Mammary epithelial cell (primary cell): ENCODE measurements at regions of chr11 and their contacts with region 1.

Region 1: GRCh38 chr11:107770551-107770951 is 58.7 kb upstream of the SLN start:
- DNase-seq: no peak
- H3K4me3 ChIP-seq: no peak overlapping the region
- H3K27ac ChIP-seq: no peak overlapping the region
- H3K4me1 ChIP-seq: no peaks in the 10 kb centered on the region
- H3K27me3 ChIP-seq: no peaks in the 10 kb centered on the region
- CTCF ChIP-seq: no peak

Region 2: GRCh38 chr11:107689317-107690202 is 81.0 kb before region 1 on chr11:
- CTCF ChIA-PET with region 1: no interaction called
- dilution Hi-C with region 1: no loop called
- in situ Hi-C with region 1: no loop called
- intact Hi-C with region 1: loop called (anchors 2 kb)
- DNase-seq: peak; percentile 34
- H3K4me3 ChIP-seq: no peak overlapping the region
- H3K27ac ChIP-seq: no peak overlapping the region
- H3K4me1 ChIP-seq: no peaks in the 10 kb centered on the region
- H3K27me3 ChIP-seq: no peaks in the 10 kb centered on the region
- CTCF ChIP-seq: peak; percentile 28 to 72

Region 3: GRCh38 chr11:107785401-107785800 is 14.8 kb after region 1 on chr11:
- CTCF ChIA-PET with region 1: no interaction called
- dilution Hi-C with region 1: no loop called
- in situ Hi-C with region 1: no loop called
- intact Hi-C with region 1: no loop called
- DNase-seq: no peak
- H3K4me3 ChIP-seq: no peak overlapping the region
- H3K27ac ChIP-seq: no peak overlapping the region
- H3K4me1 ChIP-seq: no peaks in the 10 kb centered on the region
- H3K27me3 ChIP-seq: no peaks in the 10 kb centered on the region
- CTCF ChIP-seq: no peak

Region 4: DNA sequence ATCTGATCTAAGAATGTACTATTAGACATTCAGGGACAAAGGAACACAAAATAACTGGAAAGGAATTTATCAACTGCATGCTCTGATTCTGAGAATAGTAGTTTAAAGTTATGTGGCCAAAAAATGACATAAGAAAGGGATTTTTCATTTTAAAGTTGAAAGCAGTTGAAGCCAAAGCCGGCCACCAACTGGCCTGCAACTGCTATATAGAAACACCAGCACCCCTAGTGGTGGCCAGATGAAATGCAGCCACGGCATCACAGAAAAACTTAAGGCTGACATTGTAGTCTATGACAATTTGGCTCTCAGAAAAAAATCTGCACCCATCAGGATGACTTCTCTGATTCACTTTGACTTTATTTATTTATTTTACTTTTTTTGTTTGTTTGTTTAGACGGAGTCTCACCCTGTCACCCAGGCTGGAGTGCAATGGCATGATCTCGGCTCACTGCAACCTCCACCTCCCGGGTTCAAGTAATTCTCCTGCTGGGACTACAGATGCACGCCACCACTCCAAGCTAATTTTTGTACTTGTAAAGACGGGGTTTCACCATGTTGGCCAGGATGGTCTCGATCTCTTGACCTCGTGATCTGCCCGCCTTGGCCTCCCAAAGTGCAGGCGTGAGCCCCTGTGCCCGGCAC is 28.8 kb after region 1 on chr11:
- CTCF ChIA-PET with region 1: no interaction called
- dilution Hi-C with region 1: no loop called
- in situ Hi-C with region 1: no loop called
- intact Hi-C with region 1: no loop called
- DNase-seq: peak; percentile 38
- H3K4me3 ChIP-seq: no peak overlapping the region
- H3K27ac ChIP-seq: no peak overlapping the region
- H3K4me1 ChIP-seq: no peaks in the 10 kb centered on the region
- H3K27me3 ChIP-seq: no peaks in the 10 kb centered on the region
- CTCF ChIP-seq: peak; percentile 96 to 99

Region 5: DNA sequence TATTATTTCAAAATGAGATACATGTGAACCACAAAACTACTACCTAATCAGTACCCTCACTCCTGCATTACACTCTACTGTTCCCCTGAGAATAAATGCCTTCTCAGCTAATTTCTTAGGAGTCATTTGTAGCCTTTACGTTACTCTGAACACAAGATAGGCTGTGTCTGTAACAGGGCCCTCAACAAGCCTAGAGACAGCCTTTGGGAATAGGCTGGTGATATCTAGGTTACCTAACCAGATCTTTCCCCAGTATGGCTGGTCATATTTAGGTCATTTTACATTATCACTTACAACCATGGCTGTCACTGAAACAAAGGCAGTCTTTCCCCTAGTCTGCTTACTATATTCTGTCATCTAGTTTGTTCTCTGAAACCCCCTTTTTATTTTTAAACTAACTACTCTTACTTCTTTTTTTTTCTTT is 466.5 kb after region 1 on chr11:
- CTCF ChIA-PET with region 1: no interaction called
- dilution Hi-C with region 1: no loop called
- in situ Hi-C with region 1: no loop called
- intact Hi-C with region 1: no loop called
- DNase-seq: no peak
- H3K4me3 ChIP-seq: no peak overlapping the region
- H3K27ac ChIP-seq: no peak overlapping the region
- H3K4me1 ChIP-seq: peaks cover 8% of the 10 kb centered on the region
- H3K27me3 ChIP-seq: no peaks in the 10 kb centered on the region
- CTCF ChIP-seq: no peak